Sigmoid colon (tissue), 7 donors: ENCODE measurements at regions of chr1 and their contacts with region 1.

Region 1: DNA sequence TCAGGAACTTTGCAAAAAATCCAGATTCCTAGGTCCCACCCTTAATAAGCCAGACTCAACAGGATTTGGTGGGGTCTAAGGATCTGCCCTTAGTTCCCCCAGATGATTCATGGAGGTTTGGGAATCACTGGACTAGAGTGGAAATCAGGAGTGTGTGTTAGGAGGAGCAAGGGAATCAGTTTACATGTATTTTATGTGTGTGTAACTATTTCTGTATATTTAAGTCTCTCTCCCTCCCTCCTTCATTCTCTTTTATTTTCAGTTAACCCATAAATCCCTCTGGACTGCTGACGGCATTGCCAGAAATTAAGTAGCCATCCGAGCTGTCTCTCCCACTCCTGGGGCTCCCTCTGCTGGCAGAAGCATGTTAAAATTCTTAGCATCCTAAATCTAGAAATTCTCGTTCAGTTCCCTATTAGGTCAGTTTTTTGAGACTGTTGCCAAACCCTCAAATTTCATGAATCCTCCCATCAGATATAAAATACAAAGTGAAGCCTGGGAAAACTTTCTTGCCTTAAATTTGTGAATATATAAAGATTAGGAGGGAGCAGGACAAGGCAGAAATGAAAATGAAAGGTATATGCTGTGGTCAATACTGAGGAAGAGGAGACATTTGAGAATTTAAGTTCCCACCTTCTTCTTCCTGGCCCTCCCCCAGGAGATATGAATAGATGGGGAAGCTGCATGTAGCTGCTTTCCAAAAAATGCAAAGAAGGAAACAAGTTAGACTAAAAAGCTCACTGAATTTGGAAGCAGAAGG is 11.7 kb upstream of the HSD11B1 start:
- DNase-seq: peak; percentile 86
- H3K4me3 ChIP-seq: no peak overlapping the region
- H3K27ac ChIP-seq: peak overlapping the region in 1 of 4 donors; percentile 26
- H3K4me1 ChIP-seq: peaks cover 0 to 20% (median 11%) of the 10 kb centered on the region in 4 donors
- H3K27me3 ChIP-seq: no peaks in the 10 kb centered on the region
- CTCF ChIP-seq: peak; percentile 63 to 82 (median 77)
- EP300 ChIP-seq: no peak
- POLR2A ChIP-seq: no peak

Region 2: GRCh38 chr1:209565759-209566678 is 126.9 kb before region 1 on chr1:
- intact Hi-C with region 1: no loop called
- DNase-seq: peak; percentile 83
- H3K4me3 ChIP-seq: no peak overlapping the region
- H3K27ac ChIP-seq: no peak overlapping the region
- H3K4me1 ChIP-seq: peaks cover 0 to 7% (median 3%) of the 10 kb centered on the region in 4 donors
- H3K27me3 ChIP-seq: peaks cover 0 to 13% (median 0%) of the 10 kb centered on the region in 3 donors
- CTCF ChIP-seq: peak; percentile 12 to 66 (median 41)
- EP300 ChIP-seq: no peak
- POLR2A ChIP-seq: no peak

Region 3: DNA sequence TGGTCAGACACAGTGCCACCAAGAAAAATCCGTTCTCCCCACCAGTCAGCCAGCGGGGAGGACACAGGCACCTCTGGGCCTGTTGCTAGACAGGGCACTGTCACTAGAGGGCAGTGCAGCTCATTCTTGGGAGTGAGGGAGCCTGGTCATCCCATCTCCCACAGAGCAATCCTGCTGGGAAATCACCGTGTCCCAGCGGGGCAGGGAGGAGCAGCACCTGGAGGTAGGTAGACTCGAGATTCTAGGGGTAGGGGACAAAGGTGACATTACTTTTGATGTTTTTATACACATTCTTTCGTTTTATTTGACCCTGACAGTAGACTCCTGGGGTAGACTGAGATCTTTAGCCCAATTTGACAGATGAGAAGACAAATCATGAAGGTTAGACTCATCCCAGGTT is 116.1 kb before region 1 on chr1:
- intact Hi-C with region 1: loop called (anchors 1 kb)
- DNase-seq: peak; percentile 86
- H3K4me3 ChIP-seq: no peak overlapping the region
- H3K27ac ChIP-seq: no peak overlapping the region
- H3K4me1 ChIP-seq: no peaks in the 10 kb centered on the region
- H3K27me3 ChIP-seq: peaks cover 0 to 20% (median 4%) of the 10 kb centered on the region in 3 donors
- CTCF ChIP-seq: peak; percentile 78 to 94 (median 89)
- EP300 ChIP-seq: no peak
- POLR2A ChIP-seq: no peak

Region 4: GRCh38 chr1:209643285-209644020 is 49.5 kb before region 1 on chr1:
- intact Hi-C with region 1: loop called (anchors 5 kb)
- DNase-seq: no peak
- H3K4me3 ChIP-seq: no peak overlapping the region
- H3K27ac ChIP-seq: peak overlapping the region; percentile 54 to 82 (median 72)
- H3K4me1 ChIP-seq: peaks cover 0 to 52% (median 41%) of the 10 kb centered on the region in 4 donors
- H3K27me3 ChIP-seq: no peaks in the 10 kb centered on the region
- CTCF ChIP-seq: no peak
- EP300 ChIP-seq: no peak
- POLR2A ChIP-seq: no peak

Region 5: GRCh38 chr1:209747580-209748262 is 54.8 kb after region 1 on chr1:
- intact Hi-C with region 1: loop called (anchors 5 kb)
- DNase-seq: peak; percentile 95
- H3K4me3 ChIP-seq: peak overlapping the region; percentile 9 to 41 (median 30)
- H3K27ac ChIP-seq: no peak overlapping the region
- H3K4me1 ChIP-seq: peaks cover 0 to 9% (median 4%) of the 10 kb centered on the region in 4 donors
- H3K27me3 ChIP-seq: no peaks in the 10 kb centered on the region
- CTCF ChIP-seq: peak; percentile 84 to 97 (median 87)
- EP300 ChIP-seq: no peak
- POLR2A ChIP-seq: no peak

Region 6: DNA sequence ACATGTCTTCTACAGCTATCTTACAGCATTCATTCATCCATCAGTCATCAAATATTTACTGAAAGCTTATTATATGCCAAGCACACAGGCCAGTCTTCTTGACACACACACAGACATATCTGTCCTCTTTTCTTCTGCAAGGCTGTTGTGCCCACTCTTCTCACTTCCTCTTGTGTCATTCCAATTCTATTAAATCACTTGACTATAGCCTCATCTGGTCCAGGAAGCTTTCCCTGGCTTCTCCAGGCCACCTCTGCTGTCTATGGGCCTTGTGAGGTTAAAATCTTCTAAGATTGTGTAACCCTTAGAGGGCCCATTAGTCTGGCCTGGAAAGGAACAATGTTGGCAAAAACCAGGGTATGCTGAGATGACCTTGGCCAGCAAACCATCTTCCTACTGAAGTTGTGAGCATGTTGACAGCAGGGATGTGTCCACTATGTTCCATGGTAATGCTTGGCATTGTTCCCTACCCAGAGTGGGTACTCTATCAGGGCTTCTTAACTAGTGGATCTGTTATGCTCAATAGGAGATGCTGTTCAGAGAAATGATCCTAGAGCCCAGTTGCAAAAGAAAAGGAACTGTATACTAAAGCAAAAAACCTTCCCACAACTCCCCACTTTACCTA is 68.2 kb after region 1 on chr1:
- intact Hi-C with region 1: no loop called
- DNase-seq: no peak
- H3K4me3 ChIP-seq: no peak overlapping the region
- H3K27ac ChIP-seq: no peak overlapping the region
- H3K4me1 ChIP-seq: no peaks in the 10 kb centered on the region
- H3K27me3 ChIP-seq: no peaks in the 10 kb centered on the region
- CTCF ChIP-seq: no peak
- EP300 ChIP-seq: no peak
- POLR2A ChIP-seq: no peak

Region 7: DNA sequence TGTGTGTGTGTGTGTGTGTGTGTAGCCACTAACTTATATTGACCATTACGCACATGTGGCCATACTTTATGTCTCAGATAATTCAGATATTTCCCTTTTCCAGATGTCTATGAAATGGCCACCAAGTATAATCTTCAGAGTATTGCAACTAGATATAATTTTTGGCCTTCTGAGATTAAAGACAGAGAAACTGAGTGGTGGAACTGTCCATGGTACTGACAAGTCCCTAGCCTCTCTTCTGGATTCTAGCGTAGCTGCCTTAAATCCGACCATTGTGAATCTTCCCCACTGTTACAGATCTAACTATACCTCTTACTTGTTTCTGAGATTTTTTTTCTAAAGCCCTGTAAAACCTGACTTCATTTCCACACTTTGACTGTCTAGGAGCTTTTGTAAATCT is 439.7 kb after region 1 on chr1:
- intact Hi-C with region 1: no loop called
- DNase-seq: no peak
- H3K4me3 ChIP-seq: no peak overlapping the region
- H3K27ac ChIP-seq: no peak overlapping the region
- H3K4me1 ChIP-seq: no peaks in the 10 kb centered on the region
- H3K27me3 ChIP-seq: no peaks in the 10 kb centered on the region
- CTCF ChIP-seq: no peak
- EP300 ChIP-seq: no peak
- POLR2A ChIP-seq: no peak